Keratinocyte (primary cell): ENCODE measurements at regions of chr13 and their contacts with region 1.

Region 1: GRCh38 chr13:85806553-85807175 is 7.4 kb upstream of the SLITRK6 start:
- DNase-seq: peak; percentile 2
- H3K4me3 ChIP-seq: no peak overlapping the region
- H3K27ac ChIP-seq: no peak overlapping the region
- H3K4me1 ChIP-seq: no peaks in the 10 kb centered on the region
- H3K27me3 ChIP-seq: no peaks in the 10 kb centered on the region
- CTCF ChIP-seq: peak in 1 of 3 experiments; percentile 28

Region 2: GRCh38 chr13:84925443-84925842 is 881.2 kb before region 1 on chr13:
- dilution Hi-C with region 1: loop called (anchors 25 kb)
- DNase-seq: peak; percentile 2
- H3K4me3 ChIP-seq: no peak overlapping the region
- H3K27ac ChIP-seq: no peak overlapping the region
- H3K4me1 ChIP-seq: no peaks in the 10 kb centered on the region
- H3K27me3 ChIP-seq: no peaks in the 10 kb centered on the region
- CTCF ChIP-seq: no peak

Region 3: DNA sequence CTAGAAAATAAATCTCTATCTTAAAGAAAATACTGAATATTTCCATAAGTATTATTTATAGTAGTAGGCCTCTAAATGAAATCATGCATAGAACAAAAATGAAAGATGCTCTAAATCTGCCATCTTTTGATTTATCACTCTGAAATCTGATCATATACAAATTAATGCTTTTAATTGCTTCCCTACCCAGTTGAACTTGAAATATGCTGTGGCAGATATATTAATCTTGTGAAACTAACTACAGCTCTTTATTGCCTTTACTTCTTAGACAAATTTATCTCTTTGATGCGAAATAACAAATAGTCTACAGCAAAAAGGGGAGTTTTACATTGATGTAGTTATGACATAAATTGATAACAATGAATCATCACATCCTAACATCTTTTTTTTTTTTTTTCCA is 503.2 kb after region 1 on chr13:
- dilution Hi-C with region 1: no loop called
- DNase-seq: no peak
- H3K4me3 ChIP-seq: no peak overlapping the region
- H3K27ac ChIP-seq: no peak overlapping the region
- H3K4me1 ChIP-seq: no peaks in the 10 kb centered on the region
- H3K27me3 ChIP-seq: no peaks in the 10 kb centered on the region
- CTCF ChIP-seq: no peak